ENCODE measurements at regions of chr2 and their contacts with region 1.

Region 1: GRCh38 chr2:195124391-195125079 is 532.5 kb upstream of the SLC39A10 start:
- ATAC-seq: peak in 2 of 8 experiments; percentile 33 to 37
- H3K4me3 ChIP-seq: no peak overlapping the region
- H3K27ac ChIP-seq: no peak overlapping the region
- H3K4me1 ChIP-seq: no peaks in the 10 kb centered on the region

Region 2: DNA sequence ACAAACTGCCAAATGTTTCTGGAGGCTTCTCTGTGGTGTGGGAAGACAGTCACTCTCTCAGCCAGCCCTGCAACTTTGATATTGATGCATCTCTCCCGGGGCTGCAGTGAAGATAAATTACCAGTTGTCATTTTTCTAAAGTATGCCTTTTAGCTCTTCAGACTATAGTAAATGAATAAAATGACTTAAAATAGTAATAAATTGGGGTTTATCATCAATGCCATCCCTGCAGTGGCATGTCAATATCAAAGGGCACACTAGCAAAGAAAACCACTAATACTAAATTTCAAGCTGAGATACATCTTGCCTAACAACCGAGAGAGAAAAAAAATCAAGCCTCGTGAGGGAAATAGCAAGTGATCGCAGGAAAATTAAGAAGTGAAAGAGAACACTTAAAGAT is 217.0 kb before region 1 on chr2:
- in situ Hi-C with region 1: no loop called
- ATAC-seq: no peak
- H3K4me3 ChIP-seq: no peak overlapping the region
- H3K27ac ChIP-seq: no peak overlapping the region
- H3K4me1 ChIP-seq: no peaks in the 10 kb centered on the region

Region 3: GRCh38 chr2:195029804-195030654 is 94.5 kb before region 1 on chr2:
- in situ Hi-C with region 1: no loop called
- ATAC-seq: no peak
- H3K4me3 ChIP-seq: no peak overlapping the region
- H3K27ac ChIP-seq: no peak overlapping the region
- H3K4me1 ChIP-seq: no peaks in the 10 kb centered on the region

Region 4: DNA sequence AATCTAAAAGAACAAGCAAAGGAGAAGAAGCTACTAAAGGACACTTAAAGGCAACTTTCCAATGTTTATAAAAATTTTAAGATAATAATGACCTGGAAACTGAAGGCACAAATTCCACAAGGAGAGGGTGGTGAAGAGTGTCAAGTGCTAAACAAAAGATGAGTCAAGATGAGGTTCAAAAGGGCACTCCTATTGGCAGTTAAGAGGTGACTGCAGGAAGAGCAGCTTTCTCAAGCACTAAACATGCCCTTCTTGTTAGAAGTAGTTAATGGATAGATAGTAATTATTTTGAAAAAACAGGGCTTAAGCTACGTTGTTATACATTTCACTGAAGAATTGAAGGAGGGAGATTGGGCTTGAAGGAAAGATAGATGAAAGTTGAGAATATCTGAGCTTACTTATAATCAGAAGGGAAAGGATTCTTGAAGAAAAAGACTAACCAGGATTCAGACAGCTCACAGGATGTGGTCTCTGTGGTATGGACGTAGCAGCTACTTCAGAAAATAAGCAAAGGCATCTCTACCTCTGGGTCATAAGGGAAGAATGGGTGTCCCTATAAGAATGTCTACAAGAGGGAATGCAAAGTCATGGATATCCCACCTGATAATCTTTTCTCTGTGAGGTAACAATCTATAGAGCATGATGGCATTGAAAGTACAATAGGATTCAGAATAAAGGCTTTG is 77.8 kb after region 1 on chr2:
- in situ Hi-C with region 1: loop called in 1 of 9 experiments (anchors 25 kb)
- ATAC-seq: no peak
- H3K4me3 ChIP-seq: no peak overlapping the region
- H3K27ac ChIP-seq: no peak overlapping the region
- H3K4me1 ChIP-seq: no peaks in the 10 kb centered on the region